ENCODE measurements at regions of chr14 and their contacts with region 1.

Region 1: GRCh38 chr14:20682435-20683124 is 1.8 kb upstream of the RNASE4 start:
- DNase-seq: peak; percentile 94
- ATAC-seq: peak; percentile 91

Region 2: DNA sequence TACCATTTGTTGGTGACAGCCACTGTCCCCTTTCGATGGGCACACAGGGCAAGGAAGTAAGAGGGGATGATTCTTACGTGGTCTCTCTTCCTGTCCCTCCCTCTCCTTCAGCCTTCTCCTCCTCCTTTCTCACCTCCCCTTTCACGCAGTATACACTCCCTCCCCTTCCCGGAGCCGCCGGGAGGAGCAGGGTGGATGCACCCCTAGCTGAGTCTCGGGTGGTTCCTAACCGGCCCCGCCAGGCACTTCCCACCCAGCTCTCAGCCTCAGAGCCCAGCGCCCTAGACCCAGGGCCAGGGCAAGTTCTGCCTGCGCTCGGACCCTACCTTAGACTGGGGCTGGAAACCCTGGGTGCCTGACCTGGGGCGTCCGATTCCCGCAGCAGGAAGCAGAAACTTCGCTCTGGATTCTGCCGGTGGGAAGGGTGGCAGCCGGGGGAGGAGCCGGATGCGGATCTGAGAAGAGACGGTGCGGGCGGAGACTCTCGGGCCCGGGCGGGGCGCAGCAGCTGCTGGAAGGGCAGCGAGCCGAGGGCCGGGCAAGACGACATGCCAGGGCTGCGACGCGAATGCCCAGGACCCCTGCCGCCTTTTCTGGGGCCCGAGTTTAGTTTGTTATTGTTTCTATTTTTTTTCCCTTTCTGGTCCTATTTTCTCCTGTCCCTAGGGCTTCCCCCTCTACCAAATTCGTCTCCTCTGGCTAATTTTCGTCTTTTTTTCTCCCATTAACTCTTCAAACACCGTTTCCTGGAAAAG is 269.4 kb before region 1 on chr14 and contains the start of gene TEP1:
- intact Hi-C with region 1: loop called (anchors 5 kb)
- DNase-seq: peak; percentile 95
- ATAC-seq: peak; percentile 96
- total RNA-seq, gene TEP1: 8.2 TPM

Region 3: GRCh38 chr14:20613094-20614037 is 69.2 kb before region 1 on chr14:
- intact Hi-C with region 1: loop called (anchors 1 kb)
- DNase-seq: peak; percentile 78
- ATAC-seq: peak; percentile 85

Region 4: DNA sequence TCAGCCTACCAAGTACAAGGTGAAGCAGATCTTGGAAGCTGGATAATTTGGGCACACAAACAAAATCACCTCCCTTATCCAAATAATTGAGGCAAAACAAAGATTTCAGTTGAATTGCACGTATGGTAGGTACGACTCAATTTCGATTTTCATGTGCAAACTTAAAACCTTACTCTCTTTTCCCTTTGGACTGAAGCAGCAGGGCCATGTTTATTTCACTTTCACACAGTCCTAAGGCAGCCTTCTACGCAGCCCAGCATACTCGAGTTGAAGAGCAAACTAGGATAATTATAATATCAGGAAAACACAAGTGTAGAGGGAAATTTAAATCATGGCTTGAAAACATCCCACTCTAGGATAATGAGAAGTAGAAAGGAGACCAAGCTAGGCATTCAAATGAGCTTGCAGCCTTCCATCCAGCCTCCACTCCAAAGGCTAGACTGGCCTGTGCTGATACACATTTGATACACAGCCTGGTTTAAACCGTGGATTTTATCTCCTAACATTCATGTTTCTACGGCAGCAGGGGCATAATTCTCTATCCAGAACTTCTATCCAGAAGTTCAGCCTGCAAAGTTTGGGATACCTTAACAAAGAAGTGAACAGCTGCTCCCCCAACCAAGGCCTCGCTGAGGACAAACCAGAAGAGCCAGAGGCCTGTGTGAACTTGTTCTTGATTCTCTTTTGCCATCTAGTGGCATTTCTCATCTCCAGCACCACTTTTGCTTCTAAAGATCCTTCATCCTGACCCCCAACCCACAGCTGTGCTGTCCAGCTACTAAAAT is 357.2 kb after region 1 on chr14:
- intact Hi-C with region 1: loop called (anchors 5 kb)
- DNase-seq: no peak
- ATAC-seq: peak; percentile 73

Measured in Right ventricle myocardium inferior (tissue), 1 donor.